Activated CD8-positive, alpha-beta T cell treated with anti-CD3 and anti-CD28 coated beads for 36 hours (primary cell): ENCODE measurements at regions of chr1 and their contacts with region 1.

Region 1: GRCh38 chr1:53220171-53220961 is at the start of gene CZIB:
- DNase-seq: peak; percentile 99
- ATAC-seq: peak; percentile 94
- H3K4me3 Mint-ChIP-seq: peak within 1 kb of the TSS; percentile 88
- H3K27ac Mint-ChIP-seq: peak within 1 kb of the TSS; percentile 97
- H3K4me1 Mint-ChIP-seq: peaks cover 20% of the 10 kb centered on the region
- H3K27me3 Mint-ChIP-seq: no peaks in the 10 kb centered on the region
- CTCF ChIP-seq: no peak
- total RNA-seq, gene CZIB: 35.3 to 36.4 TPM

Region 2: GRCh38 chr1:53196485-53197270 is 23.7 kb before region 1 on chr1 and contains the start of gene CPT2:
- CTCF ChIA-PET with region 1: no interaction called
- POLR2A ChIA-PET with region 1: interaction called, 15 read pairs
- intact Hi-C with region 1: no loop called
- DNase-seq: peak; percentile 96
- ATAC-seq: peak; percentile 99
- H3K4me3 Mint-ChIP-seq: peak within 1 kb of the TSS; percentile 99
- H3K27ac Mint-ChIP-seq: peak within 1 kb of the TSS; percentile 98
- H3K4me1 Mint-ChIP-seq: peaks cover 27% of the 10 kb centered on the region
- H3K27me3 Mint-ChIP-seq: no peaks in the 10 kb centered on the region
- CTCF ChIP-seq: no peak
- total RNA-seq, gene CPT2: 17.8 to 18.6 TPM

Region 3: DNA sequence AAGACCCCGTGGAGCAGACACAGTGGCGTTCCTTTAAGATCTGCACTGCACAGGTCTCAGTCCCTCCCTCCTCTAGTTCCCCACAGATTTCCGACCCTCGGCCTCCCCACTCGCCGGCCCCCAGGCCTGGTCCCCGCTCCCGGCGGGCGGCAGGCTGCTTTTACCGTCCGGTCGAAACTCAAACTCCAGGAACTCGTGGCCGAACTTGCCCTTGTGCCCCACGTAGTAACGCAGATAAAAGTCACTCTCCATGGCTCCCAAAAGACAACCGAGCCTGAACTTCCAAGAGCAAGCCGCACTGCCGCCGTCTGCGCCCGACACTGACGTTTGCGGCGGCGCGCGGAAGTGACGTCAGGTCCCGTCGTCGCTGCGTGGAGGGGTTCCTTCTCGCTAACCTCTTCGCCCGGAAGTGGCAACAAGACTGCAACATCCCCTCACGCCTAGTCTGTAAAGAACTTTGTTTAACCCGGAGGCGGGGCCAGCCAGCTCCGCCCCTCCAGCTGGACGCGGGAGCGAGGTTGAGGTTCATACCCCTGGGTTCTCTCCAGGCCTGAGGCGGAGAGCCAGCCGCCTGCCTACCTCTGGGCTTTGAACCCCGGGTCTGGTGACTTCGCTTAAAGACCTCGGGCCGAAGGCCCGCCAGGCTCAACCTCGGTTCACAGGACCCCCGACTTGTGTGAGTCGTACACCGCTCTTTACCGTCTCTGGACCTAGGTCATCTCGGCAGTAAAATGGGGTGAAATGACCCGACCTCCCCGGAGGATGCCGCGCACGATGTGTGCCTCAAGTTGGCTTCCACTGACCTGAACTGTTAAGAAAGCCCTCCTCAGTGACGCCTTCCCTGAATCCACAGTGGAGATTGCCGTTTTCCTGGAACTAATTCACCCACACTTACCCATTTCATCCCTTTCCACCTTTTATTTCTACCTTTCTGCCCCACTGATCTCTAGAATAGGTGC is 18.1 kb after region 1 on chr1 and contains the start of gene MAGOH:
- CTCF ChIA-PET with region 1: interaction called, 5 read pairs
- POLR2A ChIA-PET with region 1: interaction called, 11 read pairs
- intact Hi-C with region 1: no loop called
- DNase-seq: peak; percentile 96
- ATAC-seq: peak; percentile 100
- H3K4me3 Mint-ChIP-seq: peak within 1 kb of the TSS; percentile 98
- H3K27ac Mint-ChIP-seq: peak within 1 kb of the TSS; percentile 88
- H3K4me1 Mint-ChIP-seq: peaks cover 30% of the 10 kb centered on the region
- H3K27me3 Mint-ChIP-seq: no peaks in the 10 kb centered on the region
- CTCF ChIP-seq: no peak
- total RNA-seq, gene MAGOH: 90.9 to 91.4 TPM

Region 4: GRCh38 chr1:53249706-53250105 is 29.3 kb after region 1 on chr1:
- CTCF ChIA-PET with region 1: no interaction called
- POLR2A ChIA-PET with region 1: no interaction called
- intact Hi-C with region 1: no loop called
- DNase-seq: no peak
- ATAC-seq: no peak
- H3K4me3 Mint-ChIP-seq: no peak overlapping the region
- H3K27ac Mint-ChIP-seq: no peak overlapping the region
- H3K4me1 Mint-ChIP-seq: no peaks in the 10 kb centered on the region
- H3K27me3 Mint-ChIP-seq: no peaks in the 10 kb centered on the region
- CTCF ChIP-seq: no peak

Region 5: GRCh38 chr1:53266106-53266505 is 45.7 kb after region 1 on chr1:
- CTCF ChIA-PET with region 1: no interaction called
- POLR2A ChIA-PET with region 1: no interaction called
- intact Hi-C with region 1: no loop called
- DNase-seq: no peak
- ATAC-seq: peak; percentile 13
- H3K4me3 Mint-ChIP-seq: no peak overlapping the region
- H3K27ac Mint-ChIP-seq: no peak overlapping the region
- H3K4me1 Mint-ChIP-seq: no peaks in the 10 kb centered on the region
- H3K27me3 Mint-ChIP-seq: no peaks in the 10 kb centered on the region
- CTCF ChIP-seq: no peak